ENCODE measurements at regions of chrX and their contacts with region 1.

Region 1: DNA sequence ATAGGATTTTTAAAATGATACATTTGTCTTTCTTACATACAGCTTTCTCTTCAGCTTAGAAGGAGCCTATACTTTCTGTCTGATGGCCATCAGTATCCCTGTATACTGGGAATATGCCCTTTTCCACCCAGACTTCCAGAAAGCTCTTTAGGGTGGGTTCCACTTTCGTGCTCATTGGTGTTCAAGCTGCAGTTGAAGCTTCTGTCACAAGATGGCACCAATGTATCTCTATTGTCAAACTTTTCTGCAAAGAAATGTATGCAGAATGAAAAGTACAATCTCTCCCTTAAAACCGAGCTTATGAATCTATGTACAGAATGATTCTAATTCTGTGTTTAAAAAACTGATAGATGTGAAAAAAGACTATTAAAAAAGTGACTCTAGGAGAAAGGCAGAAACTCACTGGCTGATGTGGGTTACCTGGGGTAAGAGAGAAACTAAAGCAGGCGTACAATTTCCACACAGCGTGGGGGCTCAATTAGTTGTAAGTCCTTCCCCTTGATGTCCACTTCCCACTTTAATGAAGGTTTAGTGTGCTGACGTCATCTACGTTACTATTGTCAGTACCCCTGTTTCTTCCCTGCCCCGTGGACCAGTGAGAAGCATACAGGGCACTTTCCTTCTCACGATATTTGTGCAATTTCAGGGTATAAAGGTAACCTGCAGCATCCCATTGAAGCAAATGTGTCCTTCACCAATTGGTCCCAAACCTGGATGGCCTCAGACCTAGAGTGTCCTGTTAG is 57.3 kb upstream of the TCEAL2 start:
- DNase-seq: no peak
- ATAC-seq: no peak
- H3K4me3 ChIP-seq: no peak overlapping the region
- H3K27ac ChIP-seq: no peak overlapping the region
- H3K4me1 ChIP-seq: no peaks in the 10 kb centered on the region
- H3K27me3 ChIP-seq: peaks cover 0 to 12% (median 0%) of the 10 kb centered on the region in 3 donors
- CTCF ChIP-seq: peak in 2 of 5 experiments; percentile 17 to 46
- POLR2A ChIP-seq: no peak

Region 2: DNA sequence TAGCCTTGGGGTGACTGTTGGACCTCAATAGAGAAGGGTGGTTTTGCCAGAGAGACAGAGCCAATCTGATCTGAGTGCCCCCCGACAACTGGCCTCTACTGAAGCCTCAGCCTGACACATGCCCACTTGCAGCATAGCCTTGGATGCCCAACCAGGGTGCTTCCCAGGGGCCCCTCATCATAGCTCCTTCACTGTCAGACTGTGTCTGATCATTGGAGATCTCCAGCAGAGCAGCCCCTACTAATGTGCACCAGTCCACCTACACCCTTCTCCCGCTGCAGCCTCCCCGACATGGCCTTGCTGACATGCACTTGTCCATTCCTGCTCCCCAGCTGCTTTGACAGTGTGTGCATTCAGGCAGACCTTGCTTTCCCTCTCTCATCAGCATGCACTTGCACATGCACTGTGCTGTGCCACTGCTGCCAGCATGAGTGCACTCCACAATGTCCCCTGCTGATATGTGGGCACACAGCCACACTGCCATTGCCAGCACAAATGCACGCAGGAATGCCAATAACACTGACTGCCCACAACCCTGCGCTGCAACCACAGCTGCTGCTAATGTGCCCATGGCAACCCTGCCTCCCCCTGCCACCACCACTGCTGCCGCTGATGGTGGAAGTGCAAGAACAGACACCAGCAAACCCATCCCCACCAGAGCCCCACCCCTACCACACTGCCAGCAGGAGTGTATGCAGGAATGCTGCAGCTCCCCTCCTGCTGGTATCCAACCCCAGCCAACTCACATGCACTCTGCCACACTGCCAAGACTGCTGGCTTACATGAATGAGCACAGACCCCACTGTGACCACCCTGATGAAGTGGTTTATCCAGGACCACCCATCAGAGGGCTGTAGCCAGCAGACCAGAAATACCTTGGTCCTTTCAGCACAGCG is 68.2 kb before region 1 on chrX:
- in situ Hi-C with region 1: no loop called
- intact Hi-C with region 1: no loop called
- DNase-seq: no peak
- ATAC-seq: no peak
- H3K4me3 ChIP-seq: no peak overlapping the region
- H3K27ac ChIP-seq: no peak overlapping the region
- H3K4me1 ChIP-seq: no peaks in the 10 kb centered on the region
- H3K27me3 ChIP-seq: no peaks in the 10 kb centered on the region
- CTCF ChIP-seq: no peak
- POLR2A ChIP-seq: no peak

Region 3: DNA sequence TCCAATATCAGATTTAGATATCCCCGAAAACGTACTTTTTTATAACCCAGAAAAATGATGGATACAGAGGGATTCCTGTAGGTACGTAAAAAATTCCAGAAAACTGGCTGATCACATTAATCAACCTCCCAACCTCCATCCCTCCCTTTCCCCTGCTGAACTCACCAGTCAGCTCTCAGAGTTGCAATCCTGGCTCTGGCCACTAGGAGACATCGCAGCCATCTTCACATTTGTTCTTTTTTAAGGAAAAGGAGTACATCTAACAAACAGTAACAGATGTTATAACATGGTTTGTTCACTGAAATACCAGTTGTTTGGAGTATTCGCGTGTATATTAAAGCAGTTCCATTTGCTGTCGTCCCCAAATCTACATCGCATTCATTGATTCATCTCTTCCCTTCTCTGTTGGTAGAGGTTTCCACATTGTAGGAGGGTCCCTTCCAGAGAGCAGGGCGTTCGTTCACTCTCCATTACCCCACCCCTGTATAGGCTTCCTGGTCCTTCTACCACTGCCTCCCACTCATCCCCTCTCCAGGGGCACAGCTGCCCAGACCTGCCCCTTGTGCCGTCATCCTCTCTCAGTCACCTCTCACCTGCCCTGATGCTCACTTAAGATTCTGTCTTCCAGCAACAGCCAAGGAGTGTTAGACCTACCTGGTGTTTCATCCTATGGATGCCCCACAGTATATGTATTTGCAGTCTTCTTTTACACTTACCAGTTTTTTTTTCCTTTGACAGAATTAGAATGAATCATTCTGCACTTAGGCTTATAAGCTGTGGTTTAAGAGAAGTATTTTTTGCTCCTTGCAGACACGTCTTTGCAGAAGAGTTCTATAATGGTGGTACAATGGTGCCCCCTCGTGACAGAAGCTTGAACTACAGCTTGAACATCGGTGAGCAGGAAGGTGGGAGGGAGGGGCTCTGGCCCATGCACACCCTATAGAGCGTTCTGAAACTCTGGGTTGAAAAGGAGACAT is 832.1 kb after region 1 on chrX:
- in situ Hi-C with region 1: no loop called
- intact Hi-C with region 1: loop called (anchors 2 kb)
- DNase-seq: peak in 1 of 2 donors; percentile 19
- ATAC-seq: peak in 1 of 2 donors; percentile 14
- H3K4me3 ChIP-seq: no peak overlapping the region
- H3K27ac ChIP-seq: no peak overlapping the region
- H3K4me1 ChIP-seq: no peaks in the 10 kb centered on the region
- H3K27me3 ChIP-seq: no peaks in the 10 kb centered on the region
- CTCF ChIP-seq: peak in 3 of 5 experiments; percentile 42 to 62 (median 46)
- POLR2A ChIP-seq: no peak

Measured in gastrocnemius medialis (tissue), 4 donors.